Left cardiac atrium (tissue), 4 donors: ENCODE measurements at regions of chr2 and their contacts with region 1.

Region 1: DNA sequence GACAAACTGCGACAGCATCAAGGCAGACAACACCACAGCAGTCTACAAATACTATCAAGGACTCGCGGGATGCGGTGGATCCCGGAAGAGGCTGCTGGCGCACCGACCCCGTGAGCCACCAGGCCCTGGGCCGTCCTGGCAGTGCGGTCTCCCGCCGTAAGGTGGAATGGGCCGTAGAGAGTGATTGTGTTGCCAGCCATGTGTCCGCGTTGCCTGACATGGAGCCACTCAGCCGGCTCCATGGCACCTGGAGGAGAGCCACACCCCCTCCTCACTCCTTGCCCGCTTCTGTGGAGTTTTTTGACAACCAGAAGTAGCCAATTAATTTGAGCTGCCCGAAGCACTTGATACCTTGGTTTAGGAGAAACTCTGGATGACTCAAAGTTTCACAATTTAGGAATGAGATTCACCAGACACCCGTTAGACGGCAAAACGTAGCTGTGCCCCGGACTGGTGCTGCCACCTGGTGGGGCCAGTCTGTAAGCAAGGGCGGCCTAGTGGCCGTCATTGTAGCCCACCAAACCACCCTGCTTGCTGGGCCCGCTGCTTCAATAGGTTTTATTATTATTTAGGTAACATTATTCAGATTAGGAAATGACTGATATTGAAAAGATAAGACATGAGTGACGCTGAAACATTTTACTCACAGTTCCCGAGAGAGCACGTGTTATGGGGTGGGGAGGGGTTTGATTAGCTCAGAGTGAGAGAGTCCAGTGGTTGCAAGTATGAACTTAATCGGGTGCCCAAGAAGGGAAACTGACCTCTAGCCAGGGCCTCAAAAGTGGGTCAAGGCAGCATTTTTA is 10.2 kb upstream of the IMP4 start:
- DNase-seq: peak; percentile 83
- ATAC-seq: peak; percentile 67 to 82

Region 2: GRCh38 chr2:130154773-130155765 is 177.4 kb before region 1 on chr2:
- intact Hi-C with region 1: loop called in 1 of 2 experiments (anchors 5 kb)
- DNase-seq: peak; percentile 7
- ATAC-seq: no peak

Region 3: DNA sequence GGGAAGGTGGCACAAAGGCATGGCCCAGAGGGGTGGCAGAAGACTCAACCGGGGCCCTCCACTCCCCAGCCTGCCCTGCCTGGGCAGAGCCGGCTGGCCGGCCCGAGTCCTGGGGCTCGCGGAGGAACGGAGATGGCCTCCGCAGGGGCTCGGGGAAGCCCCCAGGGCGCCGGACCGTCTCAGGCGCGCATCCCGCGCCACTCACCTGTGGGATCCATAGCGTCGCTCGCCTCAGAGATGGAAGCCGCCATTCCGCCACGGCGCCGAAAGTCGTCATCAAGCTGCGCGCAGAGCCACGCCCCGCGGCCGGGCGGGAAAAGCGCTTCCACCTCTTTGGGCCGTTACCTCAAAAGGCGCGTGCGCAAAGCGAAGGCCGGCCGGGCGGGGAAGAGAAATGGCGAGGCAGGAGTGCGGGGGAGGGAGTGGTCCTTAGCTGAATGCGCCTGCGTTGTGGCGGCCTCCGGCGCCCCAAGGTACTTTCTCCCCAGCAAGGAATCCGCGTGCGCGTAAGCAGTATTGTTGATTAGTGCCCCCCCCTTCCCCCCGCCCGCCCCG is 151.1 kb before region 1 on chr2 and contains the start of gene SMPD4:
- intact Hi-C with region 1: loop called (anchors 5 to 10 kb)
- DNase-seq: peak; percentile 98
- ATAC-seq: peak; percentile 92 to 93
- total RNA-seq, gene SMPD4: 20.2 to 24.4 TPM

Region 4: GRCh38 chr2:130288461-130289403 is 43.7 kb before region 1 on chr2:
- intact Hi-C with region 1: no loop called
- DNase-seq: no peak
- ATAC-seq: no peak

Region 5: DNA sequence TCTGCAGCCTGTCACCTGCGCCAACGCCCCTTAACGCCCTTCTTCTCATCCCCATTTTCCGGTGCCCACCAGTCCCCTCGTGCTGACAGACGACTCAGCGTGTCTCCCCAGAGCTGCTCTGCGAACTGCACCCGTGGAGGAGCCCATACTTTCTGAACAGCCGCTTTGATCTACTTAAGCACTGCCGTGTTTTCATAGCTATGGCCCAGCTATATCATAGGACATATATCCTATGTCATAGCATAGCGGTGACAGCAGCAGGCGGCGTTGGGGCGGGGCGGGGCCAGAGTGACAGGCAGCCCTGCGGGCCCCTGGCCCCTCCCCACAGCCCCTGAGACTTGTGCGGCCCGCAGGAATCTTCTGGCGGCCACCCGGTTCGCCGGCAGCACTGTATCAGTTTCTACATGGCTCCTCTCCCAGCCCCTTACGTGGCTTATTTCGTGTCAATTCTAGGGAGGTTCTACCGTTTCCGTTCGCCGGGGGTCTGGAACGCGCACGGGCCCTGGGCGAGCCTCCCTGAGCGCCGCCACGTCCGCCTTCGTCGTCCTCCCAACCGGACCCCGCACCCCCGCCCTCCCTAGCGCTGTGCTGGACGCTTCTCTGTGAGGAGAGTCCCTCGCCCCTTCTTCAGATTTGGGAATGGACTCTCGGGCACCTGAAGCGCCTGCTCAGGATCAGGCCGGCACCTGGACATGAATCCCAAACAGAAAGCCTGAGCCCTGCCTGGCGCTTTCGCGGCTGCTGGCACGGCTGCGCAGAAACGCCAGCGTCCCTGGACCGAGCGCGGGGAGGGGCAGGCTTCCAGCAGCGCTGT is 58.8 kb after region 1 on chr2:
- intact Hi-C with region 1: no loop called
- DNase-seq: peak; percentile 86
- ATAC-seq: peak; percentile 89 to 92

Region 6: DNA sequence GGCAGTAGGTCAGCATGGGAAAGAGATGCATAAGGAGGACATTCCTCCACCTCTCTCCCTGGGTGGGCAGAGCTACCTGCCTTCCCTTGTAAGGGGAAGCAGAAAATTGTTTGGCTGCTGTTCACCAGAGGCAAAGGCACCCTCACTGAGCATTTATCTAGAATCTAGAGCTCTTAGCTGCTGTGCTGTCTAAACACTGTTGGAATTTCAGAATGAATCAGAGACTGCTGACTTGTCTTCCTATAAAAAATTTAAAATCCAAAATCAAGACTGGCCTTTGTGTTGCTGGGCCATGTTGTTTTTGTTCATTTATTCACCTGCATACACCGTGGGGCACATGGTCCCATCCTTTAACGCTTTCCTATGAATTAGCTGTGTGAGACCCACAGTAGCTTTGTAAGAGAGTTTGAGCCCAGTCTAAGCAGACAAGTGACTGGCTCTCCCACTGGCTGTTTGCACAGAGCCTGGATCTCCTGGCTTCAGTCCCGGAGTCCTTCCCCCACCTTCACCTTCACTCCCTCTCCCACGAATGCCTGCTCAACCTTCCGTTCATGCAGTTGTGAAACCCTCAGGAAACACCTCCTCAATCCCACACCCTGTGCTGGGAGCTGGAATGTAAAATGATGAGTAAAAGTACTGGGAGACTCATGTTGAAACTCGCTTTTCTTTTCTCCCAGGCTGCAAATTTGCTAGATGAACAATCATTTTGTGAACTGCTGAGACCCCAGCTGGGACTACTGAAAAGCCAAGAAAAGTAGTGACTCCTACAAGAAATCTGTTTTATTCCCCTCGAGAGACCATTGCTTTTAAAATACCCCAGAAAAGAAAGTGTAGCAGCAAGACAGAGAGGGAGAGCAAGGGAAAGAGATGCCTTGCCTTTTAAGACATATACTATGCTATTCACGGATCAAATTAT is 684.6 kb after region 1 on chr2:
- intact Hi-C with region 1: no loop called
- DNase-seq: no peak
- ATAC-seq: peak; percentile 59 to 97